ENCODE measurements at regions of chr1 and their contacts with region 1.

Region 1: DNA sequence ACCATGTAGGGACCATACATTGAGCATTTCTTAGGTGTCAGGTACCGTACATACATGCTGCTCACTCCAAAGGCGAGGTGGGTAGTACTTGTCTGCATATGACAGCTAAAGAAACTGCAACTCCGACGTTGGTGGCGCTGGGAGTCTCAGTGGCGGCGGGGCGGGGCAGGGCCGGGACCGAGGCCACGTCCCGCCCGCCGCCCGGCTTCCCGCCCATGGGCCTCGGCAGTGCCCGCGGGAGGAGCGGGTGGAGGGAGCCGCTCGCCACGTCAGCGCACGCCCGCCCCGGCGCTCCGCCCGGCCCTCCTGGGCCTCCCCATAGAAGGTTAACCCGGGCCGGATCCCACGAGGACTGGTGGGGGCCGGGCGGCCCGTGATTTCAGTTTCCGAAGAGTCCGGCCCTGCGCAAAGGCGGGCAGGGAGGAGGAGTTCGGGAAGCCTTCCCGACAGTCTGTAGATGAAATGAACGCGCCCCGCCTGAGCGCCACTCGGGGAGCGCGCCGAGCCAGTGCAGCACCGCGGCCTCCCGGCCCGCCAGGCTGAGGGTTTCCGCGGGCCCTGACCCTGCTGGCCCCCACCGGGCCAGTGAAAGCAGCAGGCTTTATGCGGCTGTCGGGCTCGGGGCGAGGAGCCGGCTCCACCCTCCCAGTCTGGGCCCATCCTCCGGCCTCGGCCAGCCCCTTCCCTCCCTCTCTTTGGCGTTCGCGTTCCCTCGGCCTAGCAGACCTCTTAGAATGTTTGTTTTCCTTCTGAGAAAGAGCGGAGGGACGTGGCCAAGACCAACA is 119.9 kb upstream of the JUN start:
- DNase-seq: peak; percentile 74 to 97 (median 82)

Region 2: GRCh38 chr1:58816072-58816746 is 87.5 kb before region 1 on chr1:
- intact Hi-C with region 1: loop called (anchors 1 kb)
- DNase-seq: peak; percentile 74 to 97 (median 83)

Measured in posterior cingulate gyrus (tissue), 11 donors.